Common myeloid progenitor, CD34-positive (primary cell): ENCODE measurements at regions of chr20 and their contacts with region 1.

Region 1: DNA sequence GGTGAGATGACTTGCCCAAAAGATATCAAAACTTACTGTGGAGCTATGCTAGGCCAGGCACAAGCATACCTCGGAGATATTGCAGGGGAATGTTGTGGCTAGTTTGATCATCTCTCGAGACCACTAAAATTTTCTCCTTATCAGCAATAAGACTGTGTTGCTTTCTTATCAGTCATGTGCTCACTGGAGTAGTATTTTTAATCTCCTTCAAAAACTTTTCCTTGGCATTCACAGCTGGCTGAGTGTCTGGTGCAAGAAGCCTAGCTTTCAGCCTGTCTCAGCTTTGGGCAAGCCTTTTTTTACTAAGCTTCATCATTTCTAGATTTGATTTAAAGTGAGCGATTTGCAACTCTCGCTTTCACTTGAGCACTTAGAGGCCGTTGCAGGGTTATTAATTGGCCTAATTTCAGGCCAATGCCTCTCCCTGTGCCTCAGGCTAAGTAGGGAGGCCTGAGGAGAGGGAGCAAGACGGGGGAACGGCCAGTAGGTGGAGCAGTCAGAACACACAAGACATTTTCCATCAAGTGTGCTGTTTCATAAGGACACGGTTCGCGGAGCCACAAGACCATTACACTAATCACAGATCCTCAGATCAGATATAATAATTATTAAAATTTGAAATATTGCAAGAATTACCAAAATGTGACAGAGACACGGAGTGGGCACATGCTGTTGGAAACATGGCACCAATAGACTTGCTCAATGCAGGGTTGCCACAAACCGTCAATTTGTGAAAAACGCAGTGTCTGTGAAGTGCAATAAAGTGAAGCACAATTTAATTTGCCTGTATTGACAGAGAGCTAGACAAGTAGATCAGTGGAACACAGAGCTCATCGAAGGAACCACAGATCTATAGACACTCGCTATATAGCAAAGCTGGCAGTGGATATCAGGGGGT is 106.8 kb upstream of the SIRPG start:
- DNase-seq: peak; percentile 78 to 82 (median 80)
- H3K4me3 ChIP-seq: no peak overlapping the region
- H3K27ac ChIP-seq: no peak overlapping the region
- H3K4me1 ChIP-seq: peaks cover 0 to 3% (median 0%) of the 10 kb centered on the region in 4 experiments
- H3K27me3 ChIP-seq: peaks cover 0 to 7% (median 0%) of the 10 kb centered on the region in 5 experiments

Region 2: GRCh38 chr20:1776681-1777475 is 12.5 kb after region 1 on chr20:
- CTCF ChIA-PET with region 1: interaction called, 41 read pairs
- POLR2A ChIA-PET with region 1: no interaction called
- DNase-seq: peak; percentile 70 to 82 (median 77)
- H3K4me3 ChIP-seq: peak overlapping the region; percentile 66 to 78 (median 74)
- H3K27ac ChIP-seq: peak overlapping the region; percentile 33 to 69
- H3K4me1 ChIP-seq: peaks cover 0 to 9% (median 9%) of the 10 kb centered on the region in 4 experiments
- H3K27me3 ChIP-seq: peaks cover 0 to 5% (median 0%) of the 10 kb centered on the region in 5 experiments

Region 3: GRCh38 chr20:2065099-2065498 is 300.7 kb after region 1 on chr20:
- CTCF ChIA-PET with region 1: no interaction called
- POLR2A ChIA-PET with region 1: no interaction called
- DNase-seq: no peak
- H3K4me3 ChIP-seq: no peak overlapping the region
- H3K27ac ChIP-seq: no peak overlapping the region
- H3K4me1 ChIP-seq: no peaks in the 10 kb centered on the region
- H3K27me3 ChIP-seq: peaks cover 0 to 43% (median 9%) of the 10 kb centered on the region in 5 experiments